HCT116 (cell line): ENCODE measurements at regions of chr10 and their contacts with region 1.

Region 1: GRCh38 chr10:26755443-26755903 is 58.0 kb downstream of the PDSS1 start:
- DNase-seq: peak; percentile 16
- ATAC-seq: no peak
- H3K4me3 ChIP-seq: no peak overlapping the region
- H3K27ac ChIP-seq: no peak overlapping the region
- H3K4me1 ChIP-seq: peaks cover 7% of the 10 kb centered on the region in 2 experiments; a peak in 3 of 4 replicates
- H3K27me3 ChIP-seq: no peaks in the 10 kb centered on the region
- CTCF ChIP-seq: no peak
- POLR2A ChIP-seq: no peak
- RAD21 ChIP-seq: no peak

Region 2: GRCh38 chr10:25778646-25779045 is 976.8 kb before region 1 on chr10:
- CTCF ChIA-PET with region 1: no interaction called
- POLR2A ChIA-PET with region 1: no interaction called
- RAD21 ChIA-PET with region 1: no interaction called
- intact Hi-C with region 1: no loop called
- DNase-seq: no peak
- ATAC-seq: no peak
- H3K4me3 ChIP-seq: no peak overlapping the region
- H3K27ac ChIP-seq: no peak overlapping the region
- H3K4me1 ChIP-seq: no peaks in the 10 kb centered on the region
- H3K27me3 ChIP-seq: peaks cover 22% of the 10 kb centered on the region
- CTCF ChIP-seq: no peak
- POLR2A ChIP-seq: no peak
- RAD21 ChIP-seq: no peak

Region 3: GRCh38 chr10:26556748-26557640 is 198.5 kb before region 1 on chr10:
- CTCF ChIA-PET with region 1: no interaction called
- POLR2A ChIA-PET with region 1: no interaction called
- RAD21 ChIA-PET with region 1: no interaction called
- intact Hi-C with region 1: no loop called
- DNase-seq: peak; percentile 50
- ATAC-seq: peak; percentile 89
- H3K4me3 ChIP-seq: peak overlapping the region; percentile 10 to 31
- H3K27ac ChIP-seq: no peak overlapping the region
- H3K4me1 ChIP-seq: peaks cover 0 to 7% of the 10 kb centered on the region in 2 experiments; a peak in 2 of 4 replicates
- H3K27me3 ChIP-seq: peaks cover 22% of the 10 kb centered on the region; the same call in 1 of the 2 replicates
- CTCF ChIP-seq: peak; percentile 75 to 93 (median 76)
- POLR2A ChIP-seq: no peak
- RAD21 ChIP-seq: peak; percentile 91

Region 4: GRCh38 chr10:26773633-26774032 is 18.2 kb after region 1 on chr10:
- CTCF ChIA-PET with region 1: no interaction called
- POLR2A ChIA-PET with region 1: no interaction called
- RAD21 ChIA-PET with region 1: no interaction called
- intact Hi-C with region 1: loop called (anchors 2 kb)
- DNase-seq: no peak
- ATAC-seq: no peak
- H3K4me3 ChIP-seq: no peak overlapping the region
- H3K27ac ChIP-seq: no peak overlapping the region
- H3K4me1 ChIP-seq: peaks cover 5 to 9% of the 10 kb centered on the region in 2 experiments; a peak in 3 of 4 replicates
- H3K27me3 ChIP-seq: no peaks in the 10 kb centered on the region
- CTCF ChIP-seq: no peak
- POLR2A ChIP-seq: no peak
- RAD21 ChIP-seq: no peak